Ovary (tissue), 10 donors: ENCODE measurements at regions of chr19 and their contacts with region 1.

Region 1: DNA sequence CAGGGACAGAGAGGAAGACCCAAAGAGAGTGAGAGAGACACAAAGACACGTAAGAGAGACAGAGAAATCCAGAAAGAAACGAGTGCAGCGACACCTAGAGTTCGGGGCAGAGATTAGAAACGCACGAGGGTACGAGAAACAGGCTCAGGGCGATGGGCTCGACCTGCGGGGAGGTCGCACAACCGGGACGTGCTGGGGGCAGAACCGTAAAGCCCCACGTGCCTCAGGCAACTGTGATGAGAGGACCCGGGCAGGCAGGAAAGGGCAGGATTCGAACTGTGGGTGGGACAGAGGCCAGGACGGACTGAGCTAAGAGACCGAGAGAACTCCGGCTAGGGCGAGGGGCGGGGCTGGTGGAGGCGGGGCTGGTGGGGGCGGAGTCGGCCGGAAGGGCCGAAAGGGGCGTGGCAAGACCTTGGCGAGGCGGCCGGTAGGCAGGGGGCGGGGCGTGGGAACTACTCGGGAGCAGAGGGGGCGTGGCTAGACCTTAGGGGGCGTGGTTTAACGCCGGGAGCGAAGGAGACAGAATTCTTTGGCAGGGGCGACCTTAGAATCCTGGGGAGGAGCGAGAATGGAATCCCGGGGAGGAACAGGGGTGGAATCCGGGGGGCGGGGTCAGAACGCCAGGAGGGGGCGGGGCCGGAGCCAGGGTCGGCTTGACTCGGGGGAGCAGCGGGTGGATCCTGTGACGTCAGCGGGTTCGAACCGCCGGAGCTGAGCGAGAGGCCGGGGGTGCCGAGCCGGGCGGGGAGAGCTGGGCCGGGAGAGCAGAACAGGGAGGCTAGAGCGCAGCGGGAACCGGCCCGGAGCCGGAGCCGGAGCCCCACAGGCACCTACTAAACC is at the start of gene NECTIN2:
- DNase-seq: peak; percentile 100
- H3K4me3 ChIP-seq: peak within 1 kb of the TSS; percentile 100
- H3K27ac ChIP-seq: peak within 1 kb of the TSS; percentile 88 to 93
- H3K4me1 ChIP-seq: peaks cover 6% of the 10 kb centered on the region
- H3K27me3 ChIP-seq: no peaks in the 10 kb centered on the region
- CTCF ChIP-seq: peak; percentile 26 to 90 (median 83)
- EP300 ChIP-seq: peak; percentile 34
- POLR2A ChIP-seq: peak; percentile 93
- total RNA-seq, gene NECTIN2: 37.8 to 185 (median 71.8) TPM

Region 2: DNA sequence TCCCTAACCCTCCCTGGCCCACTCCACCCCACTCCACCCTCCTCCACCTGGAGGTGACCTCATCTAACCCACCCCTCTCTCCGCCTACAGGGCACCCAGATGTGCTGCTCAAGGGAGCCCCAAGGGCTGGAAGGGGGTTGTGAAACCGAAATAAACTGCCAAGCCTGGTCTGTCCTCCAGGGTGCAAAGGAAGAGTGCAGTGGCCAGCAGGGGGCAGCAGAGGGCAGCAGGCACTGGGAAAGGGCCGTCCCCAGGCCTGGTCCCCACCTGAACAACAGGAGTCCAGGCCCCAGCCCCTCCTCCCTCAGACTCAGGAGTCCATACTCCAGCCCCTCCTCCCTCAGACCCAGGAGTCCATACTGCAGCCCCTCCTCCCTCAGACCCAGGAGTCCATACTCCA is 45.4 kb before region 1 on chr19:
- intact Hi-C with region 1: loop called in 3 of 4 experiments (anchors 2 to 5 kb)
- DNase-seq: peak; percentile 83 to 92 (median 90)
- H3K4me3 ChIP-seq: no peak overlapping the region
- H3K27ac ChIP-seq: no peak overlapping the region
- H3K4me1 ChIP-seq: no peaks in the 10 kb centered on the region
- H3K27me3 ChIP-seq: no peaks in the 10 kb centered on the region
- CTCF ChIP-seq: peak; percentile 92 to 95 (median 95)
- EP300 ChIP-seq: no peak
- POLR2A ChIP-seq: no peak

Region 3: GRCh38 chr19:44807652-44808462 is 38.0 kb before region 1 on chr19:
- intact Hi-C with region 1: loop called in 3 of 4 experiments (anchors 2 to 5 kb)
- DNase-seq: peak; percentile 40 to 57 (median 43)
- H3K4me3 ChIP-seq: no peak overlapping the region
- H3K27ac ChIP-seq: peak overlapping the region in 1 of 2 donors; percentile 39
- H3K4me1 ChIP-seq: peaks cover 13% of the 10 kb centered on the region
- H3K27me3 ChIP-seq: no peaks in the 10 kb centered on the region
- CTCF ChIP-seq: peak in 1 of 3 donors; percentile 16
- EP300 ChIP-seq: no peak
- POLR2A ChIP-seq: no peak

Region 4: DNA sequence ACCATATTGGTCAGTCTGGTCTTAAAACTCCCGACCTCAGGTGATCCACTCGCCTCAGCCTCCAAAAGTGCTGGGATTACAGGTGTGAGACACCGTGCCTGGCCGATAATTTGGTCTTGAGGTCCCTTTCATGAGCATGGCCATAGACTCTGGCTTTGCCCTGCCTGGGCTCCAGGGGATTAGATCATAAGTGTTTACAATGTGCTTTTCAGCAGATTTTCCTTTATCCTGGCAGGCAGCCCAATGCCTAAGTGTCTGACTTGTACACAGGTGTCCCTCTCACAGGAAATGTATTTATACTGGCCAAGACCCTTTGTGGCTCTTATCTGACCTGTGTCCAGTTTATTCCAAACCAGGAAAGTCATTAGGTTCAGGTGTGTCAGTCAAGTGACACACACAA is 21.1 kb before region 1 on chr19:
- intact Hi-C with region 1: no loop called
- DNase-seq: no peak
- H3K4me3 ChIP-seq: no peak overlapping the region
- H3K27ac ChIP-seq: no peak overlapping the region
- H3K4me1 ChIP-seq: peaks cover 9% of the 10 kb centered on the region
- H3K27me3 ChIP-seq: no peaks in the 10 kb centered on the region
- CTCF ChIP-seq: no peak
- EP300 ChIP-seq: no peak
- POLR2A ChIP-seq: no peak

Region 5: DNA sequence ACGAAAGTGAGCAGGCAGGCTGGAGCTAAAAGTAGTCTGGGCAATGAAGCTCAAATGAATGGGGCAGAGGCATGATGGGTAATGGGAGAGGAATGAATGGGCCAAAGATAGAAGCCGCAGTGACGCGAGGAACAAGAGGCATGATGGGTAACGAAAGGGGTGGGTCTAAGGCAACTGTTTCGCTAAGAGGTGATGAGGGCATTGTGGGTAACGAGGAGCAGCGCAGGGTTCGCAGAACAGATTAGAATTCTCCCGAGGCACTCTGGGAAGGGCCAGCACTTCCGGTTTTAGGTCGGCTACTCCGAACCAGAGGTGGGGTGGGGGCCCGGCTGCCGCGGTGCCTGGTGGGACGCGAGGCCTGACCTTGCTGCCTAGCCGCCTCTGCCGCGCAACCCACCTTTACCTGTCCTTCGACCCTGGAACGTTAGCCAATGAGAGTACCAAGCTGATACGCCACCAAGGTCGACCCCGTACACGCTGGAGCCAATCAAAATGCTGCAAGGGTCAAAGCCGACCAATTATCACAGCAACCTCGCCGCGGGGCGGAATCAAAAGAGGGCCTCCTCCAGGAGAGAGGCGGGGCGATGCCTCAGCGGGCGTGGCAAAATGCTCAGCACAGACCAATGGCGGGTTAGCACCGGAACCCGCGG is 44.7 kb after region 1 on chr19:
- intact Hi-C with region 1: loop called in 1 of 4 experiments (anchors 1 kb)
- DNase-seq: peak in 1 of 5 donors; percentile 100
- H3K4me3 ChIP-seq: peak overlapping the region; percentile 62
- H3K27ac ChIP-seq: peak overlapping the region; percentile 89 to 91
- H3K4me1 ChIP-seq: peaks cover 12% of the 10 kb centered on the region
- H3K27me3 ChIP-seq: no peaks in the 10 kb centered on the region
- CTCF ChIP-seq: peak in 1 of 3 donors; percentile 14
- EP300 ChIP-seq: no peak
- POLR2A ChIP-seq: peak; percentile 61